CD4-positive, alpha-beta memory T cell (primary cell): ENCODE measurements at regions of chr11 and their contacts with region 1.

Region 1: DNA sequence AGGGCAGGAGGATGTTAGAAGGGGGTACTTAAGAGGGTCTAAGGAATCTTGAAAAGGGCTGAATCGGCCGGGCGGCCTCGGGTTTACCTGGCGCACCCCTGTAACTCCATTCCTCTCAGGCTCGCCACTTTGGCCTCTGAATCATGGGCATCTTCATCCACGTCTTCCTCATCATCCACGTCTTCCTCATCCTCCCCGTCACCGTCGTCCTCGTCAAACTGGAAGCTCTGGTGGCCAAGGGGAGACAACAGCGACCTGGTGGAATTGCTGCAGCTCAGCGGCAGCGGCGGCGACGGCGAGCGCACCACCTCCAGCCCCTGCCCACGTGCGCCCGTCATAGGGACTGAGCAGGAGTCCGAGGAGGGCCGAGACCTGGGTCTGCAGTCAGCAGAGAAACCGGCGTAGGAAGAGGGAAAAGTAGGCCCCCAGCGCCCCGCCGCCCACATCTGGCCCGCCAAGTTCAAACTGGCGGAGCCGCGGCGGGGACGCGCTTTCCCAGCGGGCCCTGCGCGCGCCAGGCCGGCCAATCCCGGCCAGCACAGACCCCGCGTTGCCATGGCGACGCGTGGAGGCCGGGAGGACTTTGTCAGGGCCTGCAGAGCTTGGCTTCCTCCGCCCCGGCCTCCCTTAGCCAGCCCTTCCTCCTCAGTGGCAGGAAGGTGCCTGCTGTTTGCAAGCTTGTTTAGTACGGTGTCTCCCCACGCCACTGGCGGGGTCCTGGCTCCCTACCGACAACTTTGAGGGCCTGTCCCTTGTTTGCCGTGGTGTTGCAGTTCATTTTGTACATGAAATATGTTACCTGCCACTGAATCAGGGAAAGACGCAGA is at the start of gene CCDC34:
- DNase-seq: peak; percentile 86 to 91 (median 89)
- H3K4me3 ChIP-seq: peak within 1 kb of the TSS; percentile 54 to 84
- H3K4me3 Mint-ChIP-seq: peak within 1 kb of the TSS; percentile 91 to 95 (median 93)
- H3K27ac ChIP-seq: peak within 1 kb of the TSS; percentile 53
- H3K27ac Mint-ChIP-seq: peak within 1 kb of the TSS; percentile 72 to 94 (median 89)
- H3K4me1 ChIP-seq: peaks cover 14% of the 10 kb centered on the region
- H3K4me1 Mint-ChIP-seq: peaks cover 22 to 28% (median 26%) of the 10 kb centered on the region in 4 donors
- H3K27me3 ChIP-seq: no peaks in the 10 kb centered on the region
- H3K27me3 Mint-ChIP-seq: no peaks in the 10 kb centered on the region
- total RNA-seq, gene CCDC34: 3.3 to 3.7 TPM

Region 2: DNA sequence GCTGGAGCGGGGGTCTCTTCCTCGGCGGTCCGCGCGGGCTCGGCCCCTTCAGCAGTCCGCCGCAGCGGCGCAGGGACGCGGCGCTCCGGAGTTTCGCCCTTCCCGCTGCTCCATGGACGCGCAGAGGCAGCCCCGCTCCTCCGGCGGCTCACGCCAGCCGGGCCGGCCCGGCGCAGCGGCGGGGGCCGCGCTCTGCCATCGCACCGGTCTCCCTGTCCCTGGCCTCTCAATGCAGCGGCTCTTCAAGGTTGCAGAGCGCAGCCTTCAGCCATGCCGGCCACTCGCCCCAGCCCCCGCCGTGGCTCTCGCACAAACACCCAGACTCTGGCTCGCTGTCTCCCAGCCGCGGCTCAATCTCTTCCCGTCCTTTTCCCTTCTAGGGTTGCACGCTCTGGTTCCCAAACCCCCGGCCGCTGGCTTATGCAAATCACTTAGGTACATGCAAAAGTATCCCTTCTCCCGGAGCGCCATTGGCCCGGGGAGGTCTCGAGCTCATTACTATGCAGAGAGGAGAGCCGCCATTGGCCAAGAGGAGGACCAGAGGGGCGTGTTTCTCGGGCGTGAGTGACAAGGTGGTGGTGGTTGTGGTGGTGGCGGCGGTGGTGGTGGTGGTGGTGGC is 109.5 kb after region 1 on chr11 and contains the start of gene LGR4:
- CTCF ChIA-PET with region 1: no interaction called
- POLR2A ChIA-PET with region 1: no interaction called
- intact Hi-C with region 1: loop called (anchors 2 kb)
- DNase-seq: peak; percentile 68 to 81 (median 70)
- H3K4me3 ChIP-seq: peak within 1 kb of the TSS; percentile 27 to 65
- H3K4me3 Mint-ChIP-seq: peak within 1 kb of the TSS; percentile 94 to 99 (median 95)
- H3K27ac ChIP-seq: no peak within 1 kb of the TSS
- H3K27ac Mint-ChIP-seq: peak within 1 kb of the TSS; percentile 1 to 93 (median 81)
- H3K4me1 ChIP-seq: peaks cover 13% of the 10 kb centered on the region
- H3K4me1 Mint-ChIP-seq: peaks cover 11 to 27% (median 18%) of the 10 kb centered on the region in 4 donors
- H3K27me3 ChIP-seq: no peaks in the 10 kb centered on the region
- H3K27me3 Mint-ChIP-seq: peaks cover 3 to 12% of the 10 kb centered on the region in 2 donors
- total RNA-seq, gene LGR4: 0.58 to 1.6 TPM

Region 3: GRCh38 chr11:27506200-27507182 is 143.5 kb after region 1 on chr11 and contains the start of gene LIN7C:
- CTCF ChIA-PET with region 1: no interaction called
- POLR2A ChIA-PET with region 1: interaction called, 4 read pairs
- intact Hi-C with region 1: loop called (anchors 1 kb)
- DNase-seq: peak; percentile 89 to 98 (median 93)
- H3K4me3 ChIP-seq: peak within 1 kb of the TSS; percentile 95 to 98
- H3K4me3 Mint-ChIP-seq: peak within 1 kb of the TSS; percentile 99 to 100 (median 100)
- H3K27ac ChIP-seq: peak within 1 kb of the TSS; percentile 80
- H3K27ac Mint-ChIP-seq: peak within 1 kb of the TSS; percentile 95 to 100 (median 100)
- H3K4me1 ChIP-seq: peaks cover 49% of the 10 kb centered on the region
- H3K4me1 Mint-ChIP-seq: peaks cover 34 to 65% (median 47%) of the 10 kb centered on the region in 4 donors
- H3K27me3 ChIP-seq: no peaks in the 10 kb centered on the region
- H3K27me3 Mint-ChIP-seq: no peaks in the 10 kb centered on the region
- total RNA-seq, gene LIN7C: 30.7 to 31.8 TPM

Region 4: GRCh38 chr11:28107748-28108618 is 745.0 kb after region 1 on chr11 and contains the starts of genes KIF18A and METTL15:
- CTCF ChIA-PET with region 1: no interaction called
- POLR2A ChIA-PET with region 1: no interaction called
- intact Hi-C with region 1: loop called (anchors 2 kb)
- DNase-seq: peak; percentile 96 to 98 (median 97)
- H3K4me3 ChIP-seq: peak within 1 kb of the TSS; percentile 64 to 74
- H3K4me3 Mint-ChIP-seq: peak within 1 kb of the TSS; percentile 91 to 99 (median 94)
- H3K27ac ChIP-seq: peak within 1 kb of the TSS; percentile 88
- H3K27ac Mint-ChIP-seq: peak within 1 kb of the TSS; percentile 95 to 100 (median 99)
- H3K4me1 ChIP-seq: peaks cover 62% of the 10 kb centered on the region
- H3K4me1 Mint-ChIP-seq: peaks cover 36 to 71% (median 54%) of the 10 kb centered on the region in 4 donors
- H3K27me3 ChIP-seq: no peaks in the 10 kb centered on the region
- H3K27me3 Mint-ChIP-seq: no peaks in the 10 kb centered on the region
- total RNA-seq, gene KIF18A: 0.81 to 1.1 TPM
- total RNA-seq, gene METTL15: 11.8 to 14.0 TPM